Activated CD8-positive, alpha-beta T cell treated with anti-CD3 and anti-CD28 coated beads, Interleukin-2, amount 10 ng/mL, durations not matched to agents 7 days and 5 days (primary cell): ENCODE measurements at regions of chr6 and their contacts with region 1.

Region 1: GRCh38 chr6:41318654-41319565 is 16.5 kb upstream of the NCR2 start:
- DNase-seq: peak; percentile 90
- ATAC-seq: peak; percentile 98
- H3K4me3 Mint-ChIP-seq: peak overlapping the region; percentile 38
- H3K27ac Mint-ChIP-seq: peak overlapping the region; percentile 71
- H3K4me1 Mint-ChIP-seq: peaks cover 26% of the 10 kb centered on the region
- H3K27me3 Mint-ChIP-seq: peaks cover 27% of the 10 kb centered on the region

Region 2: GRCh38 chr6:40819182-40819834 is 499.6 kb before region 1 on chr6:
- CTCF ChIA-PET with region 1: no interaction called
- POLR2A ChIA-PET with region 1: no interaction called
- DNase-seq: no peak
- ATAC-seq: no peak
- H3K4me3 Mint-ChIP-seq: no peak overlapping the region
- H3K27ac Mint-ChIP-seq: no peak overlapping the region
- H3K4me1 Mint-ChIP-seq: no peaks in the 10 kb centered on the region
- H3K27me3 Mint-ChIP-seq: peaks cover 18% of the 10 kb centered on the region

Region 3: GRCh38 chr6:41278699-41279405 is 40.1 kb before region 1 on chr6:
- CTCF ChIA-PET with region 1: interaction called, 21 read pairs
- POLR2A ChIA-PET with region 1: no interaction called
- DNase-seq: peak; percentile 82
- ATAC-seq: peak; percentile 89
- H3K4me3 Mint-ChIP-seq: no peak overlapping the region
- H3K27ac Mint-ChIP-seq: no peak overlapping the region
- H3K4me1 Mint-ChIP-seq: peaks cover 14% of the 10 kb centered on the region
- H3K27me3 Mint-ChIP-seq: peaks cover 10% of the 10 kb centered on the region

Region 4: GRCh38 chr6:41298785-41299502 is 20.0 kb before region 1 on chr6:
- CTCF ChIA-PET with region 1: interaction called, 127 read pairs
- POLR2A ChIA-PET with region 1: no interaction called
- DNase-seq: no peak
- ATAC-seq: peak; percentile 94
- H3K4me3 Mint-ChIP-seq: peak overlapping the region; percentile 23
- H3K27ac Mint-ChIP-seq: peak overlapping the region; percentile 85
- H3K4me1 Mint-ChIP-seq: peaks cover 43% of the 10 kb centered on the region
- H3K27me3 Mint-ChIP-seq: peaks cover 19% of the 10 kb centered on the region

Region 5: DNA sequence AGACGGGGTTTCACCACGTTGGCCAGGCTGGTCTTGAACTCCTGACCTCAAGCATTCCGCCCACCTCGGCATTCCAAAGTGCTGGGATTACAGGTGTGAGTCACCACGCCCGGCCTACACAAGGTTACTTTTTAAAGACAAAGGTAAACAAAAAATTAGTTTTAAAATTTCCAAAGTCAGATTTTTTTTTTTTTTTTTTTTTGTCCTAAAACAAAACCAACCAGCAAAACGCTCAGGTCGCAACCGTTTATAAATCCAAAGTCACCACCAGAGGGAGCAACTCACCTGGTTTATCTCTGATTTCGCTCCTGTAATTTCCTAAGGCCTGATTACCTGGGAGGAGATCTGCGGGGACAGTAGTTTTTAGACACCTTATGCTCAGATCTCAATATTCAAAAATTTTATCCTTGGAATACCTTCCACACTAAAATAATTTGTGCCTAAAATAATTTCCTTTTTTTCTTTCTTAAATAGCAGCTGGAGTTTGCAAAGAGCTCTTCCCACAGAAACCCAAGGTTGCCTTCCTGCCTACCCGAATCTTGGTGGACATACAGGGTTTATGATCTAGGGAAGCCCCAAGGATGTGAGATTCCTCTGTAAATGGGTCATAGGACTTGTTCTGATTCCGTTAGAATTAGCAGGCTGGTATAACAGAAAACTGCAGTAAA is 12.6 kb before region 1 on chr6:
- CTCF ChIA-PET with region 1: interaction called, 127 read pairs
- POLR2A ChIA-PET with region 1: interaction called, 3 read pairs
- DNase-seq: peak; percentile 71
- ATAC-seq: peak; percentile 60
- H3K4me3 Mint-ChIP-seq: no peak overlapping the region
- H3K27ac Mint-ChIP-seq: no peak overlapping the region
- H3K4me1 Mint-ChIP-seq: peaks cover 22% of the 10 kb centered on the region
- H3K27me3 Mint-ChIP-seq: peaks cover 40% of the 10 kb centered on the region

Region 6: DNA sequence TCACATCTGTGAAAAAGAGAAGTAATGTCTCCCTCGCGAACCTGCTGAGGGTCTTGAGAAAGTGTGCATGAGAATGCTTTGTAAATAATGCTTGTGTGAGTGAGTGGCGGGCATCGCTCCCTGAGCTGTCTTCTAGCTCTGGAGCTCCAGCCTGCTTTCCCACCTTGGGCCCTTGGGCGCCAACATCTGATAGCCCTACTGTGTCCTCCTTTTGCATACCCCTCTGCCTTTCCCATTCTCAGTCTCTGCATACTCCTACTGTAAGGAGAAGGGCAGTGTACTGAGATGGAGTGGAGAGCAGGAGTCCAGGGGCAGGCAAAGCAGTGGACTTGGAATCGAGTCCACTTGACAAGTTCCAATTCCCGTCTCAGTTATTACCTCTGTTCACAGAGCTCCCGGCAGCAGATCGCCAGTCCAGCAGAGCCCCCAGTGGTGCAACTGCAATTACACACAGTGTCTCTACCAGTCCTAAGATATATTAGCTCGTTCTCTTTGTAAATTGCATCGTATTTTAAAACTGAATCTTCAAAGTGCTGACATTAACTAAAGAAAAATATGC is 15.7 kb after region 1 on chr6:
- CTCF ChIA-PET with region 1: interaction called, 124 read pairs
- POLR2A ChIA-PET with region 1: interaction called, 38 read pairs
- DNase-seq: peak; percentile 49
- ATAC-seq: peak; percentile 4
- H3K4me3 Mint-ChIP-seq: peak overlapping the region; percentile 61
- H3K27ac Mint-ChIP-seq: peak overlapping the region; percentile 95
- H3K4me1 Mint-ChIP-seq: peaks cover 66% of the 10 kb centered on the region
- H3K27me3 Mint-ChIP-seq: no peaks in the 10 kb centered on the region

Region 7: GRCh38 chr6:41344876-41345275 is 26.0 kb after region 1 on chr6:
- CTCF ChIA-PET with region 1: interaction called, 10 read pairs
- POLR2A ChIA-PET with region 1: interaction called, 4 read pairs
- DNase-seq: peak; percentile 79
- ATAC-seq: peak; percentile 99
- H3K4me3 Mint-ChIP-seq: peak overlapping the region; percentile 55
- H3K27ac Mint-ChIP-seq: peak overlapping the region; percentile 91
- H3K4me1 Mint-ChIP-seq: peaks cover 87% of the 10 kb centered on the region
- H3K27me3 Mint-ChIP-seq: no peaks in the 10 kb centered on the region